ENCODE measurements at regions of chr19 and their contacts with region 1.

Region 1: DNA sequence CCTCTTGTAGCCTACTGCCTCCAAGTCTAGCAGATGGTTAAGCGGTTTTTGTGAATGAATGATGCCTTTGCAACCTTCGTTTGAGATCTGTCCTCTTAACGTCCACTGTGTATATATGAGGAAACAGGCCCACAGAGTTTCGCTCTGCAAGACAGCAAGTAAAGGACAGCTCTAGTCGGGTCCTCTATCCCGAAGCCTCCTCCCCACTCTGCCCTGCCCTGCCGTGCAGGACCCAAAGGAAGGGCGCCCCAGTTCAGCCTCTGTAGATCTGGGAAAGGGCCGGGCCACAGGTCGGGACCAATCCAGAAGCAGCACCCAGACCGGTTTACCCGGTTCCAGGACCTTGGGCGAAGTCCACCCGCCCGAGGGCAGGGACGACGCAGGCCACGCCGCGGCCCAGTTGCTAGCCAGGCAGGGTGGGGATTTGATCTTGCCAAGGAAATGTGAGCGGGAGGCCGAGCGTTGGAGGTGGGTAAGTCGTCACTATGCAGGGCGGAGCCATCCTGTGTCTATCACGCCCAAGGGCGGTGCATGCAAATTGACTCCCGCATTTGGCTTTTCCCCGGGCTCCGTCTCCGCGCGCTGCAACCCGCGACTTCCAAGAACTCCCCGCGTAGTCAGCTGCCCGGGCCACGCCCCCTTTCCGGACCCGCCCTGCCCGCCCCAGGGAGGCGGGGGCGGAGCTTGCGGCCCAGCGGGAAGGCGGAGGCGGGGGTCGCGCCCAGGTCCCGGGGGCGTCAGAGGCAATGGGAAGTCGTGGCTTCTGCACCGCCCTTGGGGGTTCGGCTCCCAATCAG is 12.5 kb downstream of the IER2 start:
- DNase-seq: peak; percentile 46 to 91 (median 75)
- ATAC-seq: peak; percentile 73
- H3K4me3 ChIP-seq: peak overlapping the region; percentile 60
- H3K4me3 Mint-ChIP-seq: peak overlapping the region; percentile 85 to 94 (median 90)
- H3K27ac ChIP-seq: peak overlapping the region; percentile 90
- H3K27ac Mint-ChIP-seq: peak overlapping the region; percentile 92 to 99 (median 97)
- H3K4me1 ChIP-seq: peaks cover 54 to 73% of the 10 kb centered on the region in 2 donors
- H3K4me1 Mint-ChIP-seq: peaks cover 26 to 87% (median 67%) of the 10 kb centered on the region in 7 donors
- H3K27me3 ChIP-seq: no peaks in the 10 kb centered on the region
- H3K27me3 Mint-ChIP-seq: no peaks in the 10 kb centered on the region

Region 2: DNA sequence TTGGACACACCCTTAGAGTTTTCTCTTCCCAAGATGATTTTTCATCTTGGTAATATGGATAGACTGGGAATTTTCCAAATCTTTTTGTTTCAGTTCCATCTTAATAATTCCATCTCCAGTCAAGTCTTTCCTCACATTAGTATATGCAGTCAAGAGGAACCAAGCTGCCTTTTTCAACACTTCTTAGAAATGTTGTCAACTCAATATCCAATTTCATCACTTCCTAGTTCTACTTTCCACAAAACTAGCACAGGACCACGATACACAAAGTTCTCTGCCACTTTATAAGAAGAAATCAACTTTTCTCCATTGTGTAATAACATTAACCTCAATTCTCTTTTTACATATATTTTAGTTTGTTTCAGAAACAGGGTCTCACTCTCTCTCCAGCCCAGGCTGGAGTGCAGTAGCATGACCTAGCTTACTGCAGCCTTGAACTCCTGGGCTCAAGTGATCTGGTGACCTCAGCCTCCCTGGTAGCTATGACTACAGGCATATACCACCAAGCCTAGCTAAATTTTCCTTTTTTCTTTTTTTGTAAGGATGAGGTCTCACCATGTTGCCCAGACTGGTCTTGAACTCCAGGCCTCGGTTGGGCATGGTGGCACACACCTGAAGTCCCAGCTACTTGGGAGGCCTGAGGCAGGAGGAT is 737.4 kb before region 1 on chr19:
- CTCF ChIA-PET with region 1: no interaction called
- POLR2A ChIA-PET with region 1: no interaction called
- intact Hi-C with region 1: no loop called
- DNase-seq: no peak
- ATAC-seq: no peak
- H3K4me3 ChIP-seq: no peak overlapping the region
- H3K4me3 Mint-ChIP-seq: no peak overlapping the region
- H3K27ac ChIP-seq: no peak overlapping the region
- H3K27ac Mint-ChIP-seq: no peak overlapping the region
- H3K4me1 ChIP-seq: no peaks in the 10 kb centered on the region
- H3K4me1 Mint-ChIP-seq: no peaks in the 10 kb centered on the region
- H3K27me3 ChIP-seq: no peaks in the 10 kb centered on the region
- H3K27me3 Mint-ChIP-seq: no peaks in the 10 kb centered on the region

Region 3: DNA sequence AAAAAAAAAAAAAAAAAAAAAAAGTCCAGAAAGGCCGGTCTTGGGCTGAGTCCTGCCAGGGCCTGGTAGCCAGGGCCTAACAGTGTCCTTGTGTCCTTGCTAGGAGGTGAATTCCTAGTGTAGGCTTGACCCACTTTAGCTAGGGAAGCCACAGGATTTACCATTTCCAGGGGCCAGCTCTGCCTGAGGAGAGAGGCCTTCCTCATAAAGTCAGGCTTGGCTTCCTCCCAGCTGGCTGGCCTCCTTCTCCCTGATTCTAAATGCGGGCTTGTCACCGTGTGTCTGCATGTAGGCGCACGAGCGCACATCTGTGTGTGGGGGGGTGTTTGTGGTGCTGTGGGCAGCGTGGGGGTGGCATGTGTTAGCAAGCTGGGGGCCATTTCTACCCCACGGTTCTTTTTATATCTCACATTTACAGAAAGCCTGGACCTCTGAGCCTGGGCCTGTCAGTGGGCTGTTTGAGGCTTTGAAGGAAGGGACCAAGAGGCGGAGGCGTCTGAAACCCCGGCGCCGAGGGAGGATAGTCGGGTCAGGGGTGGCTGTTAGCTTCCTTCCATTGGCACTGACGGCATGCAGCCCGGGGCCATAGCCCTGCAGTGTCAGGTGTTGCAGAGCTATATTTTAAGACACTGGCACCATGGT is 19.2 kb after region 1 on chr19:
- CTCF ChIA-PET with region 1: interaction called, 3 read pairs
- POLR2A ChIA-PET with region 1: interaction called, 263 read pairs
- intact Hi-C with region 1: loop called in 1 of 2 experiments (anchors 1 kb)
- DNase-seq: no peak
- ATAC-seq: peak; percentile 71
- H3K4me3 ChIP-seq: no peak overlapping the region
- H3K4me3 Mint-ChIP-seq: peak overlapping the region in 8 of 10 donors; percentile 24 to 71 (median 62)
- H3K27ac ChIP-seq: no peak overlapping the region
- H3K27ac Mint-ChIP-seq: peak overlapping the region; percentile 20 to 86 (median 76)
- H3K4me1 ChIP-seq: peaks cover 20 to 21% of the 10 kb centered on the region in 2 donors
- H3K4me1 Mint-ChIP-seq: peaks cover 14 to 43% (median 38%) of the 10 kb centered on the region in 7 donors
- H3K27me3 ChIP-seq: no peaks in the 10 kb centered on the region
- H3K27me3 Mint-ChIP-seq: no peaks in the 10 kb centered on the region

Measured in naive thymus-derived CD4-positive, alpha-beta T cell (primary cell).